Activated T-helper 1 cell treated with anti-CD3 and anti-CD28 coated beads, Interleukin-12 subunit alpha, Interleukin-12 subunit beta, Interleukin-2, Interleukin-4 antibody, amounts not matched to agents 30 ng/mL and 10 ng/mL and 1 ng/mL, durations not matched to agents 14 hours and 24 hours and 36 hours (primary cell): ENCODE measurements at regions of chr10 and their contacts with region 1.

Region 1: GRCh38 chr10:96229568-96230030 is 41.8 kb downstream of the BLNK start:
- DNase-seq: peak; percentile 38
- H3K4me3 Mint-ChIP-seq: no peak overlapping the region
- H3K27ac Mint-ChIP-seq: no peak overlapping the region
- H3K4me1 Mint-ChIP-seq: no peaks in the 10 kb centered on the region
- H3K27me3 Mint-ChIP-seq: peaks cover 3% of the 10 kb centered on the region

Region 2: DNA sequence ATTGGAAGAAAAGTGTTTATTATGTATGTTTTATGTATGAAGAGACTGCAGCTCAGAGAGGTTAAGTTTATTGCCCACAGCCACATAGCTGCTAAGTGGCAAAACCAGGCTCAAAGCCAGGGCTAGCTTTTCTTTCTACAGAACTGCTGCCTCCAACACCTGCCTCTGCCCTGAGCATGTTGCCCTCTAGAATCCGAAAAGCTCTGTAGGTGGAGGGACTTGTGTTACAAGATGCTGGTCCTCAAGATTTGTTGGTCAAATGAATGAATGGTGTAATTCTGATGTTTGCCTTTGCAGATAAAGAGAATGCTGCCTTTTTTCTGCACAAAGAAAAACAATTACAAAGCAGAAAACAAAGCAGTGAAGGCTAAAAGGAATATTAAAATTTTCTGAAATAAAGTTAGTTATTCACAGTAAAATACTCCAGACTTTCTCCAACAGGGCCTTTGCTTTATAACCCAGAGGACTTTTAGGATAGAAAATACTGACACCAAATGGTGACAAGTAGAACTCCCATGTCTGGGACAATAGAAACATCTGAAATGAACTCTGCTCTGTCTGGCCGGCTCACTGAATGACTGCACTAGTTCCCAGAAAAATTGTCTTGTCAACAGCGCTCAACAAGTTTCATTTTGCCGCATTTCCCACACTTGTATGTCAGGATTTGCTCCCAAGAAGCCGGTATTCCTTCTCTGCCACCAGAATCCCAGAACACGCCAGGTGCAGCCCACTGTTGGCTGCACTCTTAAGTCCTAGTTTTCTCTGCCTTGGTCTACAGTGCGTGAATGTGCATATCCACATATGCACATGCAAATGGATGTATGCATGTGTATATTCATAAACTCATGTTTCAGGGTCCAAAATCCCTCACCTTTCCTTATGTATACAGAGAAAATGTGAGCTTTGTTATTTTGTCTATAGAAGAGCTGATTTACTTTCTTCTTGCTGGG is 63.6 kb after region 1 on chr10:
- intact Hi-C with region 1: loop called (anchors 1 kb)
- DNase-seq: no peak
- H3K4me3 Mint-ChIP-seq: no peak overlapping the region
- H3K27ac Mint-ChIP-seq: no peak overlapping the region
- H3K4me1 Mint-ChIP-seq: peaks cover 14% of the 10 kb centered on the region
- H3K27me3 Mint-ChIP-seq: peaks cover 5% of the 10 kb centered on the region

Region 3: DNA sequence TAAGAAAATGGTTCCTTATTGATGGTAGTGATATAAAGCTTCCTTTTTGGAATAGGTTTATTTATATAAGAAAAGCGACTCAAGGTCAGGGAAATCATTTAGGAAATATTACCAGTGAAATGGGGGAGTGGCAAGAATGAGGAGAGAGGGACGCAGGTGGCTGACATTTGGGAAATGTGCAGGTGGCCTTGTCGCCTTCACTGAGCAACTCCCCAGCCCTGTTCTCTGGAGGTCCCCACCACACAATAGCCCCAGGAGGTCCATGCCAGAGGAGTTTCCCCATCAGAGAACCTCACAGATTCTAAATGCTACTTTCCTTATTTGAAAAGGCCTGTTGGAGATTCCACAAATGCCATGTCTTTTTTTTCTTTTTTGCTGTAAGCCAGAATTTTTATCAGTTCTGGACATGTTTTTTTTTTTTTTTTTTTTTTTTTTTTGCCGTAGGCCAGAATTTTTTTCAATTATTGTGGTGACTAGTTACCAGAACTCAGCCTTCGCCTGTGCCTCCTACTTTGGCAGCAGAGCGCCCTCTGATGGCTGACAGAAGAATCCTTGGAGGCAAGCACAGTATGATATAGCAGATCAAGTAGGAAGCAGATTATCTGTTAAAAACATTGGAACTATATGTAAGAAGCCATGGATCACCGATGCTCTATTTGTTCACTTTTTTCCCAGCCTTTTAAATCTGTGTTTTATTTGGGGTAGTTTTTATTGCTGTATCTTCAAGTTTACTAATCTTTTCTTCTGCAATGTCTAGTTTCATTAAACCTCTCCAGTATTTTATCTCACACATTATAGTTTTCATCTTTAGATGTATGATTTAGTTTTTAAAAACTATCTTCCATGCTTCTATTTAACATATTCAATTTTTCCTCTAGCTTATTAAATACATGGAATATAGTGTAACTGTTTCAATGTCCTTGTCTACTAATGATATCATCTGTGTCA is 110.6 kb after region 1 on chr10:
- intact Hi-C with region 1: loop called (anchors 1 kb)
- DNase-seq: peak; percentile 29
- H3K4me3 Mint-ChIP-seq: no peak overlapping the region
- H3K27ac Mint-ChIP-seq: no peak overlapping the region
- H3K4me1 Mint-ChIP-seq: no peaks in the 10 kb centered on the region
- H3K27me3 Mint-ChIP-seq: peaks cover 6% of the 10 kb centered on the region

Region 4: GRCh38 chr10:96577069-96577468 is 347.5 kb after region 1 on chr10:
- intact Hi-C with region 1: no loop called
- DNase-seq: no peak
- H3K4me3 Mint-ChIP-seq: no peak overlapping the region
- H3K27ac Mint-ChIP-seq: no peak overlapping the region
- H3K4me1 Mint-ChIP-seq: peaks cover 40% of the 10 kb centered on the region
- H3K27me3 Mint-ChIP-seq: no peaks in the 10 kb centered on the region